Left ventricle myocardium inferior (tissue), 1 donor: ENCODE measurements at regions of chr4 and their contacts with region 1.

Region 1: DNA sequence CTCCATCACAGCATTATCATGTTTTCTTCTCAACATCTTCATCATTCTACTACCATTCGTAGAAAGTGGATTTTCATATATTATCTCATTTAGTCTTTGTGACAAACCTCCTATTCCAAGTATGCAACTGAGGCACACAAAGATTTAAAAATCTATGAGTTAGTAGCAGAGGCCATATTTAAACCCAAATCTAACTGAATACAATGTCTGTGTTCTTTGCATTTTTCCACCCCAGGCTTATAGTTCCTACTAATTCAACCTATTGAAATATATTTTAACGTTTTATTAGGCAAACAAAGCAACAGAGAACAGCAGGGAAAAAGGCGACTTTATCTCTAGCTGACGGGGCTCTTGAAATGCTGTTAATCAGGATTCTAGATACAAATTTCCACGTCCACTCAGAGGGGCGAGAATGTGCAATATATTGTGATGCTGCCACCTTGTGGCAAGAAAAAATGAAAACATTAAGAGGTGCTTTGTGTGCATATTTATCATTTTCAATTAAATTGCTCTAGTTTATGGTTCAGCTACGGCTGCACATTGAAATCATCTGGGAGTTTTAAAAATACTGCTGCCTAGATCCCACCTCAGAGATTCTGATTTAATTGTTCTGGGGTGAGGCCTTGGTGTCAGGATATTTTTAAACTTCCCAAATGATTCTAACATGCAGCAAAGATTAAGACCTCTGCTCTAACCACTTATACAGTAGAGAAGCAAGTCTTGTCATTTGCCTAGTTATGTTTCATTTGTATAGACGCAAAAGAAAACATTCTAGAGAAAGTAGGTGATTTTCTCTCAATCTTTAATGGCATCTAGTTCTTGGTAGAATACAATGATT is 315.9 kb downstream of the MAPK10 start:
- DNase-seq: no peak
- H3K4me3 ChIP-seq: no peak overlapping the region
- H3K27ac ChIP-seq: no peak overlapping the region
- H3K4me1 ChIP-seq: peaks cover 4% of the 10 kb centered on the region
- H3K27me3 ChIP-seq: no peaks in the 10 kb centered on the region
- CTCF ChIP-seq: peak; percentile 74

Region 2: GRCh38 chr4:85756938-85757337 is 287.0 kb before region 1 on chr4:
- intact Hi-C with region 1: loop called (anchors 10 kb)
- DNase-seq: no peak
- H3K4me3 ChIP-seq: no peak overlapping the region
- H3K27ac ChIP-seq: no peak overlapping the region
- H3K4me1 ChIP-seq: peaks cover 26% of the 10 kb centered on the region
- H3K27me3 ChIP-seq: no peaks in the 10 kb centered on the region
- CTCF ChIP-seq: peak; percentile 60

Region 3: GRCh38 chr4:85790582-85790981 is 253.4 kb before region 1 on chr4:
- intact Hi-C with region 1: loop called (anchors 10 kb)
- DNase-seq: no peak
- H3K4me3 ChIP-seq: no peak overlapping the region
- H3K27ac ChIP-seq: no peak overlapping the region
- H3K4me1 ChIP-seq: peaks cover 34% of the 10 kb centered on the region
- H3K27me3 ChIP-seq: no peaks in the 10 kb centered on the region
- CTCF ChIP-seq: no peak